ENCODE measurements at regions of chr7 and their contacts with region 1.

Region 1: GRCh38 chr7:87506246-87507180 is 31.0 kb upstream of the ABCB4 start:
- DNase-seq: no peak
- CTCF ChIP-seq: peak; percentile 32

Region 2: DNA sequence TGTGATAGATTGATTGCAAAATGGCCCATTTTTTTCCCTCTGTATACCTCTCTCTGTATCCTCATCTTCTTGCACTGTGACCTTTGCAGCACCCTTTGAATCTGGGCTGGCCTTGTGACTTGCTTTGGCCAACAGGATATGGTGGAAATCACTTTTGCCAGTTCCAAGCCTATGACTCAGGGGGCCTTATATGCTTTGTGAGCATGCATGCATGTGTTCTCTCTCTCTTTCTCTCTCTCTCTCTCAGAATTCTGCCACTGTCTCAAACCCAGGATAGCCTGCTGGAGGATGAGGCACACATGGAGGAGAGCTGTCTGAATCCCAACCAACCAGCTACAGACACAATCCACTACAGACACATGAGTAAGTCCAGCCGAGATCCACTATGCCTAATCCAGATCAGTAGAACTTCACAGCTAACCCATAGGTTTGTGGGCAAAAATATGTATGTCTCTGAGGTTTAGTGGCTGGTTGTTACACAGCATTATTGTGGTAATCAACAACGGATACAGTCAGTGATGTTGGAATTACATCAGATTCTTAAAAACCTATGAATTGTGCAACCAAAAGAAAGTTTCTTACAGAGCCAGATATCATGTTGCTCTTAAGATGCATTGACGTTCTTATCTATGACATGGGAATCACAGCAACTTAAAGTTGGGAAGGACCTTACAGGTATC is 10.8 kb after region 1 on chr7:
- CTCF ChIA-PET with region 1: interaction called, 17 read pairs
- POLR2A ChIA-PET with region 1: no interaction called
- DNase-seq: no peak
- CTCF ChIP-seq: no peak

Region 3: DNA sequence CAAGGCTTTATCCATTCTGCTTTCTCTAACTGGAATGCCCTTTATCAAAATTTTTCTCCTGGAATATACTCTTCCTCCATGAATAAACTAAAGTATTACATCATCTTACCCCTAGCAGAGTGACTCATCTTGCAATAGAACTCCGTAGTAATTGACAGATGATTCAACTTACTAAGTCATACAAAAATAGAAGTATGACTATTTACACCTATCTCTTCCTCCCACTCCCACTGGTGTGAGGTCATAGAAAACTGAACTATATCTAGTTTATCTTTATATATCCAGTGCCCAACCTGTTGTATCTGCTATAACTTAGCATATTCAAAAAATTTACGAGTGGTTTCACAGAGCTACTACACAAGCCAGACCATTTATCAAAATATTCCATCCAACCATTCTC is 68.1 kb after region 1 on chr7:
- CTCF ChIA-PET with region 1: no interaction called
- POLR2A ChIA-PET with region 1: no interaction called
- DNase-seq: peak; percentile 18
- CTCF ChIP-seq: no peak

Region 4: GRCh38 chr7:87715545-87715944 is 209.0 kb after region 1 on chr7:
- CTCF ChIA-PET with region 1: no interaction called
- POLR2A ChIA-PET with region 1: no interaction called
- DNase-seq: no peak
- CTCF ChIP-seq: no peak

Region 5: GRCh38 chr7:88132725-88133124 is 626.2 kb after region 1 on chr7:
- CTCF ChIA-PET with region 1: no interaction called
- POLR2A ChIA-PET with region 1: no interaction called
- DNase-seq: peak; percentile 28
- CTCF ChIP-seq: no peak

Measured in GM10248 (cell line).